Ovary (tissue), 10 donors: ENCODE measurements at regions of chr19 and their contacts with region 1.

Region 1: GRCh38 chr19:5031231-5032100 is 62.6 kb downstream of the KDM4B start:
- DNase-seq: peak; percentile 77 to 93 (median 88)
- H3K4me3 ChIP-seq: no peak overlapping the region
- H3K27ac ChIP-seq: no peak overlapping the region
- H3K4me1 ChIP-seq: peaks cover 25% of the 10 kb centered on the region
- H3K27me3 ChIP-seq: no peaks in the 10 kb centered on the region
- CTCF ChIP-seq: peak; percentile 90 to 93 (median 93)
- EP300 ChIP-seq: no peak
- POLR2A ChIP-seq: no peak

Region 2: DNA sequence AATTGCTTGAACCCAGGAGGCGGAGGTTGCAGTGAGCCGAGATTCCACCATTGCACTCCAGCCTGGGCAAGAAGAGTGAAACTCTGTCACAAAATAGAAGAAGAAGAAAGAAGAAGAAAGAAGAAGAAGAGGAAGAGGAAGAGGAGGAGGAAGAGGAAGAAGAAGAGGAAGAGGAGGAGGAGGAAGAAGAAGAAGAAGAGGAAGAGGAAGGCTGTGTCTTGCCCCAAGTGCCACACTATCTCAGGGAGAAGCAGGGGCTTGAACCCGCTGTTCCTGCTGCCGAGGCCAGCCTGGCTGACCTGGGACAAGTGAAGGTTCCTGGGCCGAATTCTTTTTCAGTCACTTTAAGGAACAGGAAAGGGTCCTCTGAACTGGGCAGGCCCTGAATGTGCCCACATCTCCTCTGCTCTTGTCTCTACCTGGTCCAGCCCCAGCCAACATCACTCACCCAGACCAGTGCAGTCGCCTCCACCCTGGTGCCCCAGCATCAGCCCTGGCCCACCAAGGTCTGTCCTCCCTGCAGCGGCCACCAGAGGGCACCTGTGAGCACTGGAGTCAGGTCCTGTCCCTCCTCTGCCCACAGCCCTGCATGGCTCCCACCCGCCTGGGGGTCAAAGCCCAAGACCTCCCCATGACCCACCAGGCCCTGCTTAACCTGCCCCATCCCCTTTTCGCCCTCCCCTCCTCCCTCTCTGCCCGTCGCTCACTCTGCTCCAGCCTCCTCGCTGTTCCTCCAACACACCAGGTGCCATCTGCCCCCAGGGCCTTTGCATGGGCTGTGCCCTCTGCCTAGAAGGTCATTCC is 219.9 kb before region 1 on chr19:
- intact Hi-C with region 1: loop called (anchors 2 to 5 kb)
- DNase-seq: peak; percentile 74 to 88 (median 86)
- H3K4me3 ChIP-seq: no peak overlapping the region
- H3K27ac ChIP-seq: no peak overlapping the region
- H3K4me1 ChIP-seq: no peaks in the 10 kb centered on the region
- H3K27me3 ChIP-seq: no peaks in the 10 kb centered on the region
- CTCF ChIP-seq: peak; percentile 68 to 83 (median 81)
- EP300 ChIP-seq: no peak
- POLR2A ChIP-seq: no peak

Region 3: GRCh38 chr19:4870025-4870700 is 161.3 kb before region 1 on chr19:
- intact Hi-C with region 1: loop called (anchors 5 to 10 kb)
- DNase-seq: peak; percentile 59 to 75 (median 62)
- H3K4me3 ChIP-seq: no peak overlapping the region
- H3K27ac ChIP-seq: no peak overlapping the region
- H3K4me1 ChIP-seq: peaks cover 6% of the 10 kb centered on the region
- H3K27me3 ChIP-seq: no peaks in the 10 kb centered on the region
- CTCF ChIP-seq: no peak
- EP300 ChIP-seq: no peak
- POLR2A ChIP-seq: no peak

Region 4: DNA sequence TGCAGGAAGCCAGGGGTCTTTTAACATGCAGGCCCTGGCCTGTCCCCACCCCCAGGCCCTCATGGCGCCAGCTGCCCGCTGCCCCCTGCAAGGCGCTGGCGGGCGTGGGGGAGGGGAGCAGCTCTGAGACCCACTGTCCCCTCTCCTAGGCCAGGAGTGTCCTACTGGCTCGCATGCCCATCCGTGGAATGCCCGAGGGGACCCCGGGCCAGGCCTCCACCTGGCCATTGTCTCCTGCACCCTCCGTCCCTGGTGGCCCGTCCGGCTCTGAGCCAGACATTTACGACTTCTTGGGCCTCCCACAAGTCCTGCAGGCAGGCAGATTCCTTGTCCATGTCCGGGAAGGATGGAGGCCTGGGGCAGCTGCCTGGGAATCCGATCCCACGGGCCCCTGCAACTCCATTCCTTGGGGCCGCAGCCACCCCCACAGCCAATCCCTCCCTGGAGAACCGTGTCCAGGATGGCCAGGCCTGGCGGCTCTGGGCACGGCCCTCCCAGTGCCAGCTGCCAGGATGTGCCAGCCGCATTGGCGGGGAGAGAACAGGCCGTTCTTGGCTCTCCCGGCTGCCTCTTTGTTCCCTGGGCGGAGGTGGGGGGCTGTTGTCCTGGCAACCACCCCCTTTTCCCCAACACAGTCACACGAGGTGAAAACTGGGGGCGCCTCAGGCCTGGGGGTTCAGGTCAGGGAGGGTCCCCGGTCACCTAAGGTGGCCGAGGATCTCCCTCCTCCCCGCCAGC is 153.5 kb before region 1 on chr19:
- intact Hi-C with region 1: loop called (anchors 5 to 10 kb)
- DNase-seq: no peak
- H3K4me3 ChIP-seq: no peak overlapping the region
- H3K27ac ChIP-seq: no peak overlapping the region
- H3K4me1 ChIP-seq: no peaks in the 10 kb centered on the region
- H3K27me3 ChIP-seq: no peaks in the 10 kb centered on the region
- CTCF ChIP-seq: no peak
- EP300 ChIP-seq: no peak
- POLR2A ChIP-seq: no peak

Region 5: DNA sequence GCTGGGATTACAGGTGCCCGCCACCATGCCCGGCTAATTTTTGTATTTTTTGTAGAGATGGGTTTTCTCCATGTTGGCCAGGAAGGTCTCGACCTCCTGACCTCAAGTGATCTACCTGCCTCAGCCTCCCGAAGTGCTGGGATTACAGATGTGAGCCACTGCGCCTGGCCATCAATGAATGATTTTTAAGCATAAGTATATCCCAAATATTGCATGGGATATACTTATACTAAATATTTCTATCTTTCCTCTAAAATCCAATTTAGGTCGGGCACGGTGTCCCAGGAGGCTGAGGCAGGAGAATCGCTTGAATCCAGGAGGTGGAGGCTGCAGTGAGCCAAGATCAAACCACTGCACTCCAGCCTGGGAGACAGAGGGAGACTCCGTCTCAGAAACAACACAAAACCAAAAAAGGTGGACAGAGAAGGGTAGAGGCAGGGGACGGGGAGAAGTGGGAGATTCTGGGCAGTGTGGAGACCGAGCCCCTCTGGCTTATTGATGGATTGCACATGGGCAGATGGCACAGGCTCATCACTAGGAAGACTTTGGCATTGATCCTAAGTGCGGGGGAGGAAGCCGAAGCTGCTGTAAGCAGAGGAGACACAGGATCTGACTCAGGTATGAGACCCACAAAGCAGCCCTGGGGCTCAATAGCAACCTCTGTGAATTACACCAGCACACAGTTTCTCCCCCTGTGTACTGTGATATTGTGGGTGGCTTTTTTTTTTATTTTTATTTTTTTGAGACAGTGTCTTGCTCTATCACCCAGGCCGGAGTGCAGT is 142.2 kb before region 1 on chr19:
- intact Hi-C with region 1: no loop called
- DNase-seq: no peak
- H3K4me3 ChIP-seq: no peak overlapping the region
- H3K27ac ChIP-seq: no peak overlapping the region
- H3K4me1 ChIP-seq: no peaks in the 10 kb centered on the region
- H3K27me3 ChIP-seq: no peaks in the 10 kb centered on the region
- CTCF ChIP-seq: no peak
- EP300 ChIP-seq: no peak
- POLR2A ChIP-seq: no peak

Region 6: GRCh38 chr19:4909897-4910593 is 121.4 kb before region 1 on chr19:
- intact Hi-C with region 1: loop called in 2 of 4 experiments (anchors 5 to 10 kb)
- DNase-seq: peak; percentile 86 to 95 (median 90)
- H3K4me3 ChIP-seq: peak overlapping the region; percentile 68
- H3K27ac ChIP-seq: no peak overlapping the region
- H3K4me1 ChIP-seq: peaks cover 5% of the 10 kb centered on the region
- H3K27me3 ChIP-seq: no peaks in the 10 kb centered on the region
- CTCF ChIP-seq: no peak
- EP300 ChIP-seq: no peak
- POLR2A ChIP-seq: no peak

Region 7: GRCh38 chr19:4976401-4977298 is 54.8 kb before region 1 on chr19:
- intact Hi-C with region 1: loop called in 1 of 4 experiments (anchors 5 kb)
- DNase-seq: peak; percentile 82 to 93 (median 88)
- H3K4me3 ChIP-seq: peak overlapping the region; percentile 18
- H3K27ac ChIP-seq: peak overlapping the region; percentile 60 to 82
- H3K4me1 ChIP-seq: peaks cover 30% of the 10 kb centered on the region
- H3K27me3 ChIP-seq: no peaks in the 10 kb centered on the region
- CTCF ChIP-seq: peak; percentile 54 to 76 (median 67)
- EP300 ChIP-seq: peak; percentile 42
- POLR2A ChIP-seq: peak; percentile 75

Region 8: GRCh38 chr19:5186293-5187050 is 155.0 kb after region 1 on chr19:
- intact Hi-C with region 1: no loop called
- DNase-seq: no peak
- H3K4me3 ChIP-seq: no peak overlapping the region
- H3K27ac ChIP-seq: no peak overlapping the region
- H3K4me1 ChIP-seq: no peaks in the 10 kb centered on the region
- H3K27me3 ChIP-seq: no peaks in the 10 kb centered on the region
- CTCF ChIP-seq: no peak
- EP300 ChIP-seq: no peak
- POLR2A ChIP-seq: no peak